Activated CD4-positive, alpha-beta T cell treated with anti-CD3 and anti-CD28 coated beads, Interleukin-2, amount 10 ng/mL, durations not matched to agents 7 days and 5 days (primary cell): ENCODE measurements at regions of chr2 and their contacts with region 1.

Region 1: DNA sequence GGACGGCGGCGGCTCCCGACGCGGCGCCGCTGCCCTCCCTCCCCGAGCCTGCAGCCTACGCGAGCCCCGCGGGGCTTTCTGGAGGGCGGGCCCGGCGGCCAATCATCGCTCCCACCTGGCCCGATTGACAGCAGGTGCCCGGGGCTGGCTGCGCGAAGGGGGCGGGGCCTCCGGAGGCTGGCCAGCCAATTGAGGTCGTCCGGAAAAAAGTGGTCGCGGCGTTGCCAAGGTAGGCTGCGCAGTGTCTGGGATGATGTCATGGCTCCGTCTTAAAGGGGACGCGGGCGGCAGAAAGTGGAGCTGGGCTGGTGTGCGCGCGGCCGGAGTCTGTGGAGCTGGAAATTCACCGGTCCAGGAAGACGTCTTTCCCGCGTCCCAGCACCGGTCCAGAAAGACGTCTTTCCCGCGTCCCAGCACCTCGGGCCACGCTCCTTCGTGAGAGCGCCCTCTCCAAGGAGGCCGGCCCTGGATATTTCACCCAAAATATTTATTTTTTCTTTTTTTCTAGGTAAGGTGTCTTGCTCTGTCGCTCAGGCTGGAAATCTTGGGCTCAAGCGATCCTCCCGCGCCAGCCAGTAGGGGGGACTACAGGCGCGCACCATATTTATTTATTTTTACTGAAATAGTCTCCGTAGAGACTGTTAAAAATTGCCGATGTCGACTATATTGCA is at the start of gene ACTR1B:
- DNase-seq: peak; percentile 97
- H3K4me3 Mint-ChIP-seq: peak within 1 kb of the TSS; percentile 95
- H3K27ac Mint-ChIP-seq: peak within 1 kb of the TSS; percentile 96
- H3K4me1 Mint-ChIP-seq: peaks cover 29% of the 10 kb centered on the region
- H3K27me3 Mint-ChIP-seq: no peaks in the 10 kb centered on the region
- total RNA-seq, gene ACTR1B: 62.9 to 68.3 TPM

Region 2: GRCh38 chr2:97645695-97646629 is 18.1 kb before region 1 on chr2 and contains the start of gene COX5B:
- CTCF ChIA-PET with region 1: interaction called, 75 read pairs
- POLR2A ChIA-PET with region 1: interaction called, 9 read pairs
- DNase-seq: peak; percentile 99
- H3K4me3 Mint-ChIP-seq: peak within 1 kb of the TSS; percentile 82
- H3K27ac Mint-ChIP-seq: peak within 1 kb of the TSS; percentile 94
- H3K4me1 Mint-ChIP-seq: peaks cover 20% of the 10 kb centered on the region
- H3K27me3 Mint-ChIP-seq: peaks cover 5% of the 10 kb centered on the region
- total RNA-seq, gene COX5B: 183 to 196 TPM

Region 3: DNA sequence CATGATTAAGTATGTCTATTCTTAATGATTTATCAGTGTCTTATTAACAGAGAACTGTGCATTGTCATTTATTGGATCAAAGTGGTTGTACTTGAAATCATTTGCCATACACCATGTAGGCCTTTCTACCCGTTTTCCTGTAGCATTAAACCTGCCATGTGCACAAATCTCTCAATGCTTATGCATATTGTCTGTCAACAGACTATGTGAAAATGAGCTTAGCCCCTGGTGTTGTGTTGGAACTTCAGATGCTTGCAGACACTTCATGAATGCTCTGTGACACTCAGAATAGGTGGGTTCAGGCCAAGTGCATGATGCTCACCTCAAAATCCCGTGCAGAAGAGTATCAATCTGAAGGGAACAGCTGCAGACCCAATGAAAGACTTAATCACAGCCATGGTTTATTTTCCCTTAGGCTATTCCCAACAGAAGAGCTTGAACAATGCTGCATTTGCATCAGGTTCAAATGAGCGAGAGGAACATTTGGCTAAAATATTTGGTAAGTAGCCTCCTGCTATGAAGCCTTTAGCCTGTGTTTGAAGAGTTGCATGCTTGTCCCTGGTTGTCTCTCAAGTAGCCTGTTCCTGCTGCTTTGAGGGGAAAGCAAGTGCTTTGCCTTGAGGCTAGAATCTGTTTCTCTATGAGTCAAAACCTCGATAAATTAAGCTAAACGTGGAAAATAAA is 11.5 kb after region 1 on chr2:
- CTCF ChIA-PET with region 1: interaction called, 14 read pairs
- POLR2A ChIA-PET with region 1: interaction called, 5 read pairs
- DNase-seq: no peak
- H3K4me3 Mint-ChIP-seq: no peak overlapping the region
- H3K27ac Mint-ChIP-seq: no peak overlapping the region
- H3K4me1 Mint-ChIP-seq: peaks cover 18% of the 10 kb centered on the region
- H3K27me3 Mint-ChIP-seq: no peaks in the 10 kb centered on the region

Region 4: DNA sequence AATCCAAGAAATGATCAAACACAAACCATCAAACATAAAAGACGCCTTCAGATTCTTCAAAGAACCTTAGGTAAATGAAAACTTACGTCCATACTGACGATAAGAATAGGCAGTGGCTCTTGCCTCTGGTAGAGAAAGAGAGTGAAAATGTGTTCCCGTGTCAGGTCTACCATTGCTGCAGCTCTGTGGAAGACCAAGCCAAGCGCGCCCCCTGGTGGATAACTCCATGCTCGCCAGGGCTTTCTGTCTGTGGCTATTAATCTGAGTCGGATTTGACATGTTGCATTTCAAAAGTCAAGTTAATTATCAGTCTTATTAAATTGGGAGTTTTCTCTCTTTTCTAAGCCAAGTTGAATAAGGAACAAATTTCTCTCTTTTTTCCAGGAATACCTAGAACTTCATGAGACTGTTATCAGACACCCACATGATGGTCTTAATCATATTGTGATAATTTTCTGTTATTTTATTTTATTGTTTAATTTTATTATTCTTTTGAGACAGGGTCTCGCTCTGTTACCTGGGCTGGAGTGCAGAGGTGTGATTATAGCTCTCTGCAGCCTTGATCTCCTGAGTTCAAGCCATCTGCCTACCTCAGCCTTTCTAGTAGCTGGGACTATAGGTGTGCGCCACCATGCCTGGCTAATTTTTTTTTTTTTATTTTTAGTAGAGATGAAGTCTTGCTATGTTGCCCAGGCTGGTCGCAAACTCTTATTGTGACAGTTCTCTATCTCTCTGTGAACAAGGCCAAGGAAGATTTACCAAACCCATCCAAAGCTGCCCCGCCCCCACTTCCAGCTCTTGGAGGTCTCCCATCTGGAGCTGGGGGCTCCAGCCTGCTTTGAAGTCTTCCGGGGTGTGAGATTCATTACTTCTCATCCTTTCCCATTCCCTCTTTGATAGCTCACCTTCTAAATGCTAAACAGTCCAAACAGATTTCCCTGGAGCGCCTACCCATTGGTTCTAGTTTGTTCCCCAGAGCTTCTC is 33.4 kb after region 1 on chr2:
- CTCF ChIA-PET with region 1: interaction called, 36 read pairs
- POLR2A ChIA-PET with region 1: interaction called, 9 read pairs
- DNase-seq: peak; percentile 94
- H3K4me3 Mint-ChIP-seq: no peak overlapping the region
- H3K27ac Mint-ChIP-seq: no peak overlapping the region
- H3K4me1 Mint-ChIP-seq: peaks cover 13% of the 10 kb centered on the region
- H3K27me3 Mint-ChIP-seq: peaks cover 6% of the 10 kb centered on the region